ENCODE measurements at regions of chr15 and their contacts with region 1.

Region 1: GRCh38 chr15:89893696-89894455 is at the start of gene AP3S2:
- DNase-seq: peak; percentile 92
- H3K4me3 Mint-ChIP-seq: peak within 1 kb of the TSS; percentile 91
- H3K27ac Mint-ChIP-seq: peak within 1 kb of the TSS; percentile 88
- H3K4me1 Mint-ChIP-seq: peaks cover 39% of the 10 kb centered on the region
- H3K27me3 Mint-ChIP-seq: no peaks in the 10 kb centered on the region
- total RNA-seq, gene AP3S2: 28.3 to 30.3 TPM

Region 2: DNA sequence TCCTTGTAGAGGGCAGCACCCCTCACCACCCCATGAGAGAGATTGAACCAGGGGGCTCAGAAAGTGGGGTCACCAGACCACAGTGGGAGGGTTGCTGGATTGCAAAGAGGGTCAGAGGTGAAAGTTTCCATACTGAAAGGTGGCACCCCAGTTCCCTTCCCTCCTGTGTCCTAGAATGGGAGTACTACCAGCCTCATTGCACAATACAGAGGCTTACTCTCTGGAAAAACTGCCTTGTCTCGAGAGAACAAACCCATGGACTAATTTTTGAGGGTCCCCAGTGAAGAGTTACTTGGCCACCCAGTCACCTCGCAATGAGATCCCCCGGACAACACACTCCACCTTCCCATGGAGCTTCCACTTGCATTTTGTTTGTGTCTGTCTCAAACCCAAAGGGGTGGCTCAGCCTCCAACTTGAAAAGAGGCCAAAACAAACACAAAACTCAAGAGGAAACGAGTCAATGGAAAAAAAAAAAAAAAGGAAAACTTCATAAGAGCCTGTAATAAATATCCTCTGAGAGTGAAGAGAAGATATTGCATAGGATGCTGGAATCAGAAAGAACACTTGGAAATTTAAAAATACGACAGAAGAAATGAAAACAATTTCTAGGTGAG is 99.1 kb before region 1 on chr15:
- CTCF ChIA-PET with region 1: no interaction called
- POLR2A ChIA-PET with region 1: no interaction called
- DNase-seq: no peak
- H3K4me3 Mint-ChIP-seq: no peak overlapping the region
- H3K27ac Mint-ChIP-seq: no peak overlapping the region
- H3K4me1 Mint-ChIP-seq: no peaks in the 10 kb centered on the region
- H3K27me3 Mint-ChIP-seq: peaks cover 15% of the 10 kb centered on the region

Region 3: GRCh38 chr15:89936051-89936785 is 42.3 kb after region 1 on chr15:
- CTCF ChIA-PET with region 1: interaction called, 5 read pairs
- POLR2A ChIA-PET with region 1: interaction called, 10 read pairs
- DNase-seq: peak; percentile 34
- H3K4me3 Mint-ChIP-seq: no peak overlapping the region
- H3K27ac Mint-ChIP-seq: no peak overlapping the region
- H3K4me1 Mint-ChIP-seq: peaks cover 24% of the 10 kb centered on the region
- H3K27me3 Mint-ChIP-seq: peaks cover 17% of the 10 kb centered on the region

Region 4: GRCh38 chr15:90001683-90002427 is 108.0 kb after region 1 on chr15:
- CTCF ChIA-PET with region 1: interaction called, 8 read pairs
- POLR2A ChIA-PET with region 1: interaction called, 18 read pairs
- DNase-seq: peak; percentile 69
- H3K4me3 Mint-ChIP-seq: peak overlapping the region; percentile 84
- H3K27ac Mint-ChIP-seq: peak overlapping the region; percentile 72
- H3K4me1 Mint-ChIP-seq: peaks cover 62% of the 10 kb centered on the region
- H3K27me3 Mint-ChIP-seq: no peaks in the 10 kb centered on the region

Region 5: DNA sequence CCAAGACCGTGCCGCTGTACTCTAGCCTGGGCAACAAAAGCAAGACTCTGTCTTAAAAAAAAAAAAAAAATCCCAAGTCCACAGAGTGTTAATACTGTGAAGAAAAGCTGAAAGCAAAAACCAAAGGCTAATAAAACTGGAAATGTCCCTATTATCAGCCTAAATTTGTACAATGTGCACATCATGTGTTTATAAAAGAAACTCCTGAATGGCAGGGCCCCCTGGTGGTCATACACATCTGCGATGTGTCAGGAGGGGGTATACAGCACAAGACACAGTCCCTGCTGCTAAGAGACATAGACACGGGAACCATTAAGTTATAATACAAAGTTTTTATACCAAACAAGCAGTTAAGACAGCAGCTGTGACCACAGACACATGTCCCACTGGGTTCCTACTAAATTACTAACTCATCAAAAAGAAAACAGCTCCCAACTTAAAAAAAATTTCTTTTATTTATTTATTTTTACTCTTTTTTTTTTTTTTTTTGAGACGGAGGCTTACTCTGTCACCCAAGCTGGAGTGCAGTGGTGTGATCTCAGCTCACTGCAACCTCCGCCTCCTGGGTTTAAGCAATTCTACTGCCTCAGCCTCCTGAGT is 177.4 kb after region 1 on chr15:
- CTCF ChIA-PET with region 1: interaction called, 34 read pairs
- POLR2A ChIA-PET with region 1: interaction called, 10 read pairs
- DNase-seq: peak; percentile 83
- H3K4me3 Mint-ChIP-seq: no peak overlapping the region
- H3K27ac Mint-ChIP-seq: no peak overlapping the region
- H3K4me1 Mint-ChIP-seq: peaks cover 10% of the 10 kb centered on the region
- H3K27me3 Mint-ChIP-seq: no peaks in the 10 kb centered on the region

Region 6: GRCh38 chr15:90086868-90087268 is 193.0 kb after region 1 on chr15:
- CTCF ChIA-PET with region 1: interaction called, 11 read pairs
- POLR2A ChIA-PET with region 1: interaction called, 8 read pairs
- DNase-seq: peak; percentile 63
- H3K4me3 Mint-ChIP-seq: no peak overlapping the region
- H3K27ac Mint-ChIP-seq: no peak overlapping the region
- H3K4me1 Mint-ChIP-seq: peaks cover 16% of the 10 kb centered on the region
- H3K27me3 Mint-ChIP-seq: no peaks in the 10 kb centered on the region

Region 7: GRCh38 chr15:90101969-90102890 is 208.4 kb after region 1 on chr15 and contains the start of gene IDH2:
- CTCF ChIA-PET with region 1: interaction called, 4 read pairs
- POLR2A ChIA-PET with region 1: interaction called, 36 read pairs
- DNase-seq: peak; percentile 79
- H3K4me3 Mint-ChIP-seq: peak within 1 kb of the TSS; percentile 75
- H3K27ac Mint-ChIP-seq: peak within 1 kb of the TSS; percentile 93
- H3K4me1 Mint-ChIP-seq: peaks cover 53% of the 10 kb centered on the region
- H3K27me3 Mint-ChIP-seq: peaks cover 11% of the 10 kb centered on the region
- total RNA-seq, gene IDH2: 218 to 224 TPM